ENCODE measurements at regions of chr12 and their contacts with region 1.

Region 1: GRCh38 chr12:10130042-10130441 is at the start of gene CLEC7A:
- DNase-seq: no peak
- H3K4me3 ChIP-seq: peak within 1 kb of the TSS in 45 of 59 donors; percentile 0 to 56 (median 27)
- H3K27ac ChIP-seq: peak within 1 kb of the TSS in 45 of 59 donors; percentile 4 to 79 (median 55)
- H3K27me3 ChIP-seq: no peaks in the 10 kb centered on the region
- CTCF ChIP-seq: no peak
- total RNA-seq, gene CLEC7A: 1.4 to 20.3 (median 5.5) TPM

Region 2: DNA sequence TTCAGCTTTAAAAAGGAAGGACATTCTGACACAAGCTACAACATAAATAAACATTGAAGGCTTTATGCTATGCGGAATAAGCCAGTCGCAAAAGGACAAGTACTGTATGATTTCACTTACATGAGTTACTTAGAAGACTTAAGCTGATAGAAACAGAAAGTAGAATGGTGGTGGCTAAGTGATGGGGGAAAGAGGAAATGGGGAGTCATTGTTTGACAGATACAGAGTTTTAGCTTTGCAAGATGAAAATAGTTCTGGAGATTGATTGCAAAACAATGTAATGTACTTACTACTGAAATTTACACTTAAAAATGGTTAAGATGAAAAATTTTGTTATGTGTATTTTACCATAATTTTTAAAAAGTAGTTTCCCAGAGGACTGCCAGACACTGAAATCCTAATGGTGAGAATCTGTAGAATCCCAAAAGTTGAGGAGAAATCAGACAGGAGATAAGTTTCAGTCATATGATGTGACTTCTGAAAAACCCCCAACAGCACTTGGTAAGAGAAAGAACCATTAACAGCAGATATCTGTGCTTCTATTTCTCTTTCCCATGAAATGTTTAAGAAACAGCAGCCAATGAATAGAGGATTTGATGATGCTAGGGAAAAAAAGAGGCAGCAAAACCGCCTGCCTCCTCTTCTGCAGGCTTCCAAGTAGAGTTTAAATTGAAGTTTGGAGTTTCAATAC is 181.3 kb before region 1 on chr12:
- intact Hi-C with region 1: loop called in 1 of 2 experiments (anchors 10 kb)
- DNase-seq: no peak
- H3K4me3 ChIP-seq: no peak overlapping the region
- H3K27ac ChIP-seq: no peak overlapping the region
- H3K27me3 ChIP-seq: peaks cover 0 to 11% (median 0%) of the 10 kb centered on the region in 45 donors
- CTCF ChIP-seq: no peak

Region 3: GRCh38 chr12:10033783-10034545 is 96.1 kb before region 1 on chr12:
- intact Hi-C with region 1: loop called in 1 of 2 experiments (anchors 10 kb)
- DNase-seq: no peak
- H3K4me3 ChIP-seq: no peak overlapping the region
- H3K27ac ChIP-seq: no peak overlapping the region
- H3K27me3 ChIP-seq: no peaks in the 10 kb centered on the region
- CTCF ChIP-seq: peak in 55 of 56 donors; percentile 28 to 73 (median 53)

Region 4: DNA sequence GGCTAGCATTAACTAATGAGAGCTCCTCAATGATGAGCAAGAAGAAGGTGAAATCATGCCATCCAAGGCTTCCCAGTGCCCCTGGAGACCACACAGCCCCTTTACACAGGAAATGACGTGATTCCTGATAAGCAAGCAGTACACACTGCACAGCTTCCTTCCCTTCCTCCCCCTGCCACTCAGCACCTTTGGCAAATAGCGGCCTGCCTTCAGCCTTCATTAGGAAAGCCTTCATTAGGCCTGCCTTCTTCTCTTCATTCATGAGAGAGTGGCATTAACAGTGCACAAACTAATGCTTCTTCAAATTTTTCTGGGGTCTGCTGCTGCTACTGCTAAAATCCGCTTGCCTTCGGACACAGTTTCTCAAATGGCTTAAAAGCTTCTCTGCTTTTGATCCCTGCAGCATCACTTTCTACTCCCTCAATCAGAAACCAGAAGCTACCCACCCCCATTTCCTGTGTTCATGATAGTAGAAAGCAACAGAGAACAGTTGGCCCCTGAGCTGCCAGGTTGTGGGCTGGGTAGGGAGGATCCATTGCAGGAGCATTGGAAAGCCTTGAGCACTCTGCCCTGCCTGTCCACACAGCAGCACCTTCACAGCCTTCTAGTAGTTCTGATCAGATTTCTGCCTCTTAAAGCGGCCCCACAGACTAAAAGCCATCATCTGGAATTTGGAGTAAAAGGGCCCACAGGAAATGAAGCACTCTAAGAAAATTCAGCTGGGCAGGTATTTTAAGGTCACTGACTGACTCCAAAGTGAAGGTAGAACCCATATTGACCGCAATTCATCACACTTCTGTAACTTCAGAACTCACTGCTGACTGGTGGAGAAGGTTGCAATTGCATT is 1415.7 kb after region 1 on chr12:
- intact Hi-C with region 1: no loop called
- DNase-seq: no peak
- H3K4me3 ChIP-seq: no peak overlapping the region
- H3K27ac ChIP-seq: no peak overlapping the region
- H3K27me3 ChIP-seq: no peaks in the 10 kb centered on the region
- CTCF ChIP-seq: no peak

Measured in dorsolateral prefrontal cortex (tissue), 120 donors.